Astrocyte of the cerebellum (primary cell): ENCODE measurements at regions of chr19 and their contacts with region 1.

Region 1: GRCh38 chr19:10289167-10289835 is 451 bp upstream of the ICAM5 start:
- DNase-seq: no peak
- H3K4me3 ChIP-seq: peak overlapping the region; percentile 14
- CTCF ChIP-seq: no peak

Region 2: GRCh38 chr19:10238172-10238783 is 51.0 kb before region 1 on chr19:
- in situ Hi-C with region 1: no loop called
- DNase-seq: no peak
- H3K4me3 ChIP-seq: no peak overlapping the region
- CTCF ChIP-seq: no peak

Region 3: DNA sequence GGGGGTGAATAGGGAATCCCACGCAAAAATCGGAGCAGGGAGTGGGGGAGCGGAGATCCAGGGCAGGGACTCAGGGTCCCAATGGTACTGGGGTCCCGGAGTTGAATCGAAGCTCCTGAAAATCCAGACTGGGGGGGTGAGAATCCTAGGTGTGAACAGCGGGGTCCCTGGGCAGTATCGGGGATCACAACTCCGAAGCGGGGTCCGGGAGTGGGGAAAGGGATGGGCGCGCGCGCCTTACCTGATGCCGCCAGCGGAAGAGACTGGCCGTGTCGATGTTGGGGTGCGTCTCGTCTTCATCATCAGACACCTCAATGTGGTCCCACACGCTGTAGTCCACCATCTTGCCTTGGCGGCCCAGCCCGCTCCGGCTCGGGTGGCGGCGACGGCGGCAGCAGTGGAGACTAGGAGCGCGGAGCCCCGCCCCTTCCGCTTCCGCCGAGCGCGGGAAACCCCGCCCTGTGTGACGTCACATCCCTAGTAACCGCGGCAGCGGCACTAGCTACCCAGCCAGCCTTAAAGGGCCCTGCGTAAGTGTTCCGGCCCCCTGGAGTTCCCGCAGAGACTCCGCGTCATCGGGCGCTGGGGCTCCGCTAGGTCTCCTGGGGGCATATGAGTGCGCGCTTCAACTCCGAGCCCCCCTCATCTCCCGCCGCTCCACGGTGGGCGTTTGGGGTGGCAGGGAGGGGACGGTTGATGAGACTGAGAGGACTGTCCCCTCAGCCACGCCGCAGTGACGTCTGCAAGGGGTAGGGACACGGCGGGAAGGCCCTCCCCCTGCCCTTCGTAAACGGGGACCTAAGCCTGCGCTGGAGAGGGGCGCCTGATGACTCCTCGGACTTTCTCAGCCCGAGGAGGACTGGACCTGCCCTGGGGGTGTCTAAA is 114.1 kb after region 1 on chr19 and contains the start of gene CDC37:
- in situ Hi-C with region 1: loop called (anchors 10 kb)
- DNase-seq: peak; percentile 87
- H3K4me3 ChIP-seq: peak within 1 kb of the TSS; percentile 100
- CTCF ChIP-seq: no peak